A549 (cell line): ENCODE measurements at regions of chr9 and their contacts with region 1.

Region 1: GRCh38 chr9:132669698-132670456 is at the start of gene DDX31:
- DNase-seq: peak; percentile 80 to 86
- ATAC-seq: peak; percentile 88 to 94
- H3K4me3 ChIP-seq: peak within 1 kb of the TSS; percentile 87
- H3K27ac ChIP-seq: peak within 1 kb of the TSS; percentile 97 to 100
- H3K4me1 ChIP-seq: peaks cover 30% of the 10 kb centered on the region
- CTCF ChIP-seq: no peak
- EP300 ChIP-seq: no peak
- POLR2A ChIP-seq: peak; percentile 95
- RAD21 ChIP-seq: no peak
- polyA plus RNA-seq, gene DDX31: 28.3 and 30.1 TPM in 2 replicates

Region 2: GRCh38 chr9:132651254-132651653 is 18.6 kb before region 1 on chr9:
- CTCF ChIA-PET with region 1: interaction called, 11 read pairs
- POLR2A ChIA-PET with region 1: interaction called, 4 read pairs
- DNase-seq: peak in 1 of 2 experiments; percentile 31
- ATAC-seq: peak; percentile 59 to 75; a peak in 4 of 6 replicates
- H3K4me3 ChIP-seq: no peak overlapping the region
- H3K27ac ChIP-seq: no peak overlapping the region
- H3K4me1 ChIP-seq: no peaks in the 10 kb centered on the region
- CTCF ChIP-seq: peak; percentile 52
- EP300 ChIP-seq: no peak
- POLR2A ChIP-seq: no peak
- RAD21 ChIP-seq: peak; percentile 18 to 23; a peak in 1 of 5 replicates